Endothelial cell of umbilical vein (primary cell): ENCODE measurements at regions of chr15 and their contacts with region 1.

Region 1: GRCh38 chr15:90221246-90221900 is 12.4 kb downstream of the CIB1 start:
- DNase-seq: peak; percentile 70
- H3K4me3 ChIP-seq: no peak overlapping the region
- H3K27ac ChIP-seq: no peak overlapping the region
- H3K4me1 ChIP-seq: no peaks in the 10 kb centered on the region
- H3K27me3 ChIP-seq: no peaks in the 10 kb centered on the region
- CTCF ChIP-seq: peak; percentile 64 to 84
- POLR2A ChIP-seq: no peak

Region 2: DNA sequence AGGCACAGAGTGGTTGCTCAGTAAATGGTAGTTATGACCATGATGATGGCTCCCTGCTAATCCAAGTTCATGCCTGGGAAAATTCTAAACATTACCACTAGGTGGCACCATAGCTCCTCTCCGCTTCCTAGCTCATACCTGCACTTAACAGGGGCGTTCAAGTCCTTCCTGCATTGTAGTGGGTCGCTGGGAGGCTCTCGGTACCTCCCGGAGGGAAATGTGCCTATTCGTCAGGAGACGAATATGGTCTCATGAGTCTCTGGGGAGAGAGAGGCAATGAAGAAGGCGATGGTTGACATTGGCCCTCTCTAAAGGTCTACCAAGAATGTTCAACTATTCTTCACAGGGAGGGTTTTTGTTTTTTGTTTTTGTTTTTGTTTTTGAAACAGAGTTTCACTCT is 481.2 kb before region 1 on chr15:
- CTCF ChIA-PET with region 1: interaction called, 11 read pairs
- POLR2A ChIA-PET with region 1: no interaction called
- dilution Hi-C with region 1: no loop called
- intact Hi-C with region 1: no loop called
- DNase-seq: peak; percentile 86
- H3K4me3 ChIP-seq: no peak overlapping the region
- H3K27ac ChIP-seq: no peak overlapping the region
- H3K4me1 ChIP-seq: no peaks in the 10 kb centered on the region
- H3K27me3 ChIP-seq: peaks cover 3 to 4% of the 10 kb centered on the region in 2 experiments
- CTCF ChIP-seq: peak; percentile 75 to 77
- POLR2A ChIP-seq: no peak

Region 3: GRCh38 chr15:89828241-89829082 is 392.9 kb before region 1 on chr15:
- CTCF ChIA-PET with region 1: no interaction called
- POLR2A ChIA-PET with region 1: no interaction called
- dilution Hi-C with region 1: no loop called
- intact Hi-C with region 1: no loop called
- DNase-seq: no peak
- H3K4me3 ChIP-seq: no peak overlapping the region
- H3K27ac ChIP-seq: no peak overlapping the region
- H3K4me1 ChIP-seq: peaks cover 5% of the 10 kb centered on the region
- H3K27me3 ChIP-seq: no peaks in the 10 kb centered on the region
- CTCF ChIP-seq: no peak
- POLR2A ChIP-seq: no peak

Region 4: DNA sequence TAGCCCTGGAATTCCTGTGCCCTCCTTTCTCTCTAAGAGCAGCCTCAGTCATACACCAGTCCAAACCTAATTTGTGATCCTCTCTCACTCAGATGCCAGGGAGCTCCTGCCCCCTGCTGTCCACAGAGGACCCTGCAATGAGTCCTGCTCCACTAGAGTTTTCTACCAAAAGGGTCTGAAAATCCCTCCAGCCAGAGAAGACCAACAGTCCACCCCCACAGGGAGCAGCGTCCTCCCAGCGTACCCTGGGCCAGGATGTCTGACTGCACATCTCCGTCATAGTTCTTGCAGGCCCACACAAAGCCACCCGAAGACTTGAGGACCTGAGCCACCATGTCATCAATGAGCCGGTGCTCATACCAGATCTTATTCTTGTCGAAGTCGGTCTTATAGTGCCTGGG is 134.5 kb before region 1 on chr15:
- CTCF ChIA-PET with region 1: interaction called, 16 read pairs
- POLR2A ChIA-PET with region 1: no interaction called
- dilution Hi-C with region 1: no loop called
- intact Hi-C with region 1: no loop called
- DNase-seq: peak; percentile 50
- H3K4me3 ChIP-seq: no peak overlapping the region
- H3K27ac ChIP-seq: no peak overlapping the region
- H3K4me1 ChIP-seq: no peaks in the 10 kb centered on the region
- H3K27me3 ChIP-seq: no peaks in the 10 kb centered on the region
- CTCF ChIP-seq: peak; percentile 83 to 91
- POLR2A ChIP-seq: no peak

Region 5: GRCh38 chr15:90151989-90152645 is 69.3 kb before region 1 on chr15:
- CTCF ChIA-PET with region 1: interaction called, 19 read pairs
- POLR2A ChIA-PET with region 1: interaction called, 4 read pairs
- dilution Hi-C with region 1: loop called (anchors 10 kb)
- intact Hi-C with region 1: no loop called
- DNase-seq: no peak
- H3K4me3 ChIP-seq: no peak overlapping the region
- H3K27ac ChIP-seq: no peak overlapping the region
- H3K4me1 ChIP-seq: no peaks in the 10 kb centered on the region
- H3K27me3 ChIP-seq: peaks cover 0 to 2% of the 10 kb centered on the region in 2 experiments
- CTCF ChIP-seq: no peak
- POLR2A ChIP-seq: no peak

Region 6: DNA sequence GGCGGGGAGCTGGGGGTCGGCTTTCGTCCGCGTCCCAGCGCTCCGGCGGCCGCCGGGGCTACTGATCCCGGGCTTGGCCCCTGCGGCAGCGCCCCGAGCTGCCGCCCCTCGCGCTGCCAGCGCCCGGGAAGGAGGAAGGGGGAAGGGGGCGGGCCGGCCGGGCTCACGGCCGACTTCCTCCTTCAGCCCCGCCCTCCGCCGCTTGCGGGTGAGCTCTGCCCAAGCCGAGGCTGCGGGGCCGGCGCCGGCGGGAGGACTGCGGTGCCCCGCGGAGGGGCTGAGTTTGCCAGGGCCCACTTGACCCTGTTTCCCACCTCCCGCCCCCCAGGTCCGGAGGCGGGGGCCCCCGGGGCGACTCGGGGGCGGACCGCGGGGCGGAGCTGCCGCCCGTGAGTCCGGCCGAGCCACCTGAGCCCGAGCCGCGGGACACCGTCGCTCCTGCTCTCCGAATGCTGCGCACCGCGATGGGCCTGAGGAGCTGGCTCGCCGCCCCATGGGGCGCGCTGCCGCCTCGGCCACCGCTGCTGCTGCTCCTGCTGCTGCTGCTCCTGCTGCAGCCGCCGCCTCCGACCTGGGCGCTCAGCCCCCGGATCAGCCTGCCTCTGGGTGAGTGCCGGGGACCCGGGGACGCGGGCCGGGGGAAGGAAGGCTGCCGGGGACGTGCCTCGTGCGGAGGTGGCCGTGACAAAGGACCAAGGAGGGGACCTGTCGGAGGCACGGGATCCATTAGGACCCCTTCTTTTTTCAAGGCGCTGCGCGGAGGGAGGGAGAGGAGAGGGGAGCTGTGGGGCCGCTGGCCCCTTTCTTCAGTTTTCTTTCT is 20.0 kb before region 1 on chr15 and contains the start of gene SEMA4B:
- CTCF ChIA-PET with region 1: interaction called, 34 read pairs
- POLR2A ChIA-PET with region 1: no interaction called
- dilution Hi-C with region 1: no loop called
- intact Hi-C with region 1: no loop called
- DNase-seq: peak; percentile 53
- H3K4me3 ChIP-seq: peak within 1 kb of the TSS; percentile 67 to 92 (median 77)
- H3K27ac ChIP-seq: no peak within 1 kb of the TSS
- H3K4me1 ChIP-seq: peaks cover 6% of the 10 kb centered on the region
- H3K27me3 ChIP-seq: no peaks in the 10 kb centered on the region
- CTCF ChIP-seq: no peak
- POLR2A ChIP-seq: peak; percentile 90
- total RNA-seq, gene SEMA4B: 7.1 and 7.8 TPM in 2 replicates

Region 7: GRCh38 chr15:90286678-90287077 is 65.3 kb after region 1 on chr15:
- CTCF ChIA-PET with region 1: interaction called, 7 read pairs
- POLR2A ChIA-PET with region 1: no interaction called
- dilution Hi-C with region 1: no loop called
- intact Hi-C with region 1: loop called (anchors 1 kb)
- DNase-seq: peak; percentile 62
- H3K4me3 ChIP-seq: no peak overlapping the region
- H3K27ac ChIP-seq: no peak overlapping the region
- H3K4me1 ChIP-seq: no peaks in the 10 kb centered on the region
- H3K27me3 ChIP-seq: no peaks in the 10 kb centered on the region
- CTCF ChIP-seq: peak; percentile 38 to 39
- POLR2A ChIP-seq: no peak

Region 8: GRCh38 chr15:90352109-90352893 is 130.9 kb after region 1 on chr15 and contains the start of gene ZNF774:
- CTCF ChIA-PET with region 1: no interaction called
- POLR2A ChIA-PET with region 1: no interaction called
- dilution Hi-C with region 1: no loop called
- intact Hi-C with region 1: no loop called
- DNase-seq: peak; percentile 96
- H3K4me3 ChIP-seq: peak within 1 kb of the TSS; percentile 55 to 90 (median 61)
- H3K27ac ChIP-seq: no peak within 1 kb of the TSS
- H3K4me1 ChIP-seq: peaks cover 5% of the 10 kb centered on the region
- H3K27me3 ChIP-seq: no peaks in the 10 kb centered on the region
- CTCF ChIP-seq: no peak
- POLR2A ChIP-seq: no peak
- total RNA-seq, gene ZNF774: 2.6 and 3.9 TPM in 2 replicates